Heart left ventricle (tissue), 16 donors: ENCODE measurements at regions of chr15 and their contacts with region 1.

Region 1: DNA sequence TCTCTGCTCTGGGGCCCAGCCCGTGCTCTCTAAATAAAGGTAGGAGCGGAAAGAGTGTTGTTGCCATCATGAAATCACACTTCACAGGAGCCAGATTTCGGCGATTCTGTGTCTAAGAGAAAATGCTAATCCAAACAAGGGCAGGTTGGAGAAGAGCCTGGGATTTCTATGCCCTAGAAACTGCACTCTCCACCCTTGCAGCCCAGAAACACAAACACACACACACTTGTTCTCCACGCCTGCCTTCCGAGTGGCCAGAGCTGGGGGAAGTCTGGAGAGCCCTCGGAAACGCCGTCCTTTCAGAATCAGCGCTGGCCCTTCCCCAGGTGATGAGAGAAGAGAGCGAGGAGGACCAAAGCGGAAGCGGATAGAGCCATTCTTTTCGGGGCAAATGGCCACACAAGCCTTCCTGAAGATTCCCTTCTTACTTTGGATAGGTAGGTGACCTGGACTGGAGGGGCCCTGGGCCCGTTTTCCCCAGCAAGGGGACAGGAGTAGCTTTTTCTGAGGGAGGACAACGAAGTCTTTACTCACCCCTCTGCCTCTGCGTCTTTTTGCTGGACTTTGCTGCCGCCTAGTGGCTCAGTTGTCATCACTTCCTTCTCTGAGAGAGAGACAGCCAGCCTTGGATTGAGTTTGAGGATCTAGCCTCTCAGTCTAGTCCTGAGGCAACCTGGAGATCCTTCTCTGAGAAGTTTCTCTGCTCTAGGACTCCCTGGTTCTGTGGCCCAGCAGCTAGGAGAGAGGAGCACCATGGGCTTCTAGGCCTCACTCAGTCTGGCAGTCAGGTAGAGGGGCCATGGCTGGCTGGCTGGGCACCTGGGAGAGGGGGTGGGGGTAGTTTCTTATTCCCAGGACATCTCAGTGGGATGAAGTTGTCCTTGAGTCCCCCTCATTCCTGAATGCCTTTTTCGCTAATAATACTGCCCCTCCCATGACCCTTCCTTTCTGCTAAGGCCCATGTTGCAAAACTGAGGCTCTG is 37.7 kb downstream of the SENP8 start:
- DNase-seq: peak; percentile 81 to 87 (median 85)
- ATAC-seq: peak; percentile 88 to 96 (median 92)
- H3K4me3 ChIP-seq: peak overlapping the region; percentile 4 to 73 (median 59)
- H3K27ac ChIP-seq: peak overlapping the region in 8 of 12 donors; percentile 35 to 72 (median 44)
- H3K4me1 ChIP-seq: peaks cover 0 to 16% (median 2%) of the 10 kb centered on the region in 12 donors
- H3K27me3 ChIP-seq: no peaks in the 10 kb centered on the region
- CTCF ChIP-seq: peak; percentile 68 to 90 (median 82)
- POLR2A ChIP-seq: no peak

Region 2: DNA sequence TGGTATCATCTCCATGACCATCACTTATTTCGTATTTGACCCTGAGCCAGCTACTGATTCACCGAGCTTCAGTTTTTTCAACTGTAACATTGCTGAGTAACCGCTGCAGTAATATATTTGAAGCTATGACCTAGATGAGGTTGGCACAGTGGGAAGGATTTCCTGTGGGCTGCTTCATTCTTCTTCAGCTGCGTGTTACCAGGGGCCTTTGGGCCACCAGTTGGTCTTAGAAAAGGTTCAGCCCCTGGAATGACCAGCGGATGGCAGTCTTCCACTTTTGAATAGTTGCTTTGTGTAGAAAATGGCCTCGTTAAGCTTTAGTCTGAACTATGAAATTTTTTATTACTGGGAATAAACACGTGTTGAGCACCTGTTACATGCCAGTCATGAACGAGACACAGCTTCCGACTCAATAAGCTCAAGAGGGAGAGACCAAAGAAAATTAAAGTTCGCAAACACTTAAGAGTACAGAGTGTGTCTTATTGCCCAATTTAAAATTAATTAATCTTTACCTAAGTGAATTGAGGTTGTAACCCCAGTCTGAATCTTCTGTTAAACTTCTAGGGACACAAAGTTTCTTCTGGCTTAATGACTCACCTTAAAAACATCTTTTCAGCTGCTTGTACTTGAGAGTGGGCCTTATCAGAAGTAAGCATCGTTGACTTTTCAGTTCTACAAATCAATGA is 403.2 kb before region 1 on chr15:
- intact Hi-C with region 1: loop called in 7 of 10 experiments (anchors 5 to 10 kb)
- DNase-seq: no peak
- ATAC-seq: peak in 2 of 4 donors; percentile 35 to 59
- H3K4me3 ChIP-seq: no peak overlapping the region
- H3K27ac ChIP-seq: no peak overlapping the region
- H3K4me1 ChIP-seq: peaks cover 0 to 20% (median 3%) of the 10 kb centered on the region in 12 donors
- H3K27me3 ChIP-seq: no peaks in the 10 kb centered on the region
- CTCF ChIP-seq: peak in 10 of 12 donors; percentile 16 to 56 (median 31)
- POLR2A ChIP-seq: no peak

Region 3: DNA sequence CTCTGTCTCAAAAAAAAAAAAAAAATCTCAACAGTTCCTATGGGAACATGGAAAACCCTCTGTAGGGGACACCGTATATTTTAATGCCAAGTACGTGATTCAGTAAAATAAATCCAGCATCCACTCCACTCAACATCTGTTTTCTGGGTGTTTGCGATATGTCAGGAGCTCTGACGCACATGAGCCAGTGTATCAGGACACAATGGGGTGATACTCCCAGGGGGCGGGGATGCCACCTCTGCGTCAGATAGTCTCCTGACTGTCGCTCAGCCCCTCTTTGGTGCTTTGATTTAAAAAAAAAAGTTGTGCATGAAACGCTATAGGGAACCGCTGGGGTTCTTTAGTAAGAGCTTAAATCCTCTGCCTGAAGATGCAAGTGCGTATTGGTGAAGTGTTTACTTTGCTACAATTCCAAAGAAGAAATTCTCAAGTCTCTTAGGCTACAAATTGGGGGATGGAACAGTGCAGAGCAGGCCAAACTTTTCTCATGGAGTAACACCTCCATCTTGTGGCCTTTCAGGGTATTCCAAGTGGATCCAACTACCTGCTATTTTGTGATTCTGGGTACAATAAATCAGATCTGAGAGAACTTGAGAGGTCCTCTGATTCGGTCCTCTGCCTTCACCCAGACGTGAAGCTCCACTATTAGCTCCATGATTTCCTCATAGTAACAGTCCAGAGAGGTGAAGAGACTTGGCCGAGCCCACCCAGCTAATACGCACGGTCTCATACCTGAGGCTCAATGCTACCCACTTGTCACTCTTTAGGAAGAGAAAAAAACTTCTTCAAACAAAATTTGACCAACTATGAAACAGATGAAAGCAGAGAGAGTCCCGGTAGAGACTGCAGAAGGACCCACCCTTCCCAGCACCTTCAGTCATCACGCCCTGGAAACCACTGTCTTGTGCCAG is 354.8 kb before region 1 on chr15:
- intact Hi-C with region 1: loop called in 2 of 10 experiments (anchors 10 kb)
- DNase-seq: no peak
- ATAC-seq: peak; percentile 57 to 84 (median 82)
- H3K4me3 ChIP-seq: no peak overlapping the region
- H3K27ac ChIP-seq: no peak overlapping the region
- H3K4me1 ChIP-seq: peaks cover 0 to 8% (median 2%) of the 10 kb centered on the region in 12 donors
- H3K27me3 ChIP-seq: no peaks in the 10 kb centered on the region
- CTCF ChIP-seq: peak; percentile 72 to 91 (median 84)
- POLR2A ChIP-seq: no peak

Region 4: DNA sequence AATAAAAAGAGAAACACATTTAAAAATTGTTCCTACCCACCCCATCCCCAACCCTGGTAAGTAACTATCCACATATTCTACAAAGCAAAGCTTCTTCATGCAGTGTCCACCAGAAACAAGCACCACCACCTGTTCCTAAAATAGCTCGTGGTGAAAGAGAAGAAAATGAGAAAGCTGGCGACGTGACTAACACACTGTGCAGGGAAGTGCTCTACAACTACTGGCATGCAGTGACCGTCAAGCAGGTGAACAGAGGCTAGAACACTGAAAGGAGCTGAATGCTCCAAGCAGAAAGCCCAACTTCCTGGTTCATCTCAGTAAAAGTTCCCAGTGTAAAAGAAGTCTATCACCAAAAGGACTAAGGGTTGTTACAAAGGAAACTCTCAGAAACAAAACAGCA is 264.9 kb before region 1 on chr15:
- intact Hi-C with region 1: loop called in 2 of 10 experiments (anchors 10 kb)
- DNase-seq: peak in 2 of 5 donors; percentile 43 to 47
- ATAC-seq: peak; percentile 83 to 91 (median 88)
- H3K4me3 ChIP-seq: no peak overlapping the region
- H3K27ac ChIP-seq: peak overlapping the region in 1 of 12 donors; percentile 23
- H3K4me1 ChIP-seq: peaks cover 0 to 9% (median 0%) of the 10 kb centered on the region in 12 donors
- H3K27me3 ChIP-seq: no peaks in the 10 kb centered on the region
- CTCF ChIP-seq: no peak
- POLR2A ChIP-seq: no peak

Region 5: DNA sequence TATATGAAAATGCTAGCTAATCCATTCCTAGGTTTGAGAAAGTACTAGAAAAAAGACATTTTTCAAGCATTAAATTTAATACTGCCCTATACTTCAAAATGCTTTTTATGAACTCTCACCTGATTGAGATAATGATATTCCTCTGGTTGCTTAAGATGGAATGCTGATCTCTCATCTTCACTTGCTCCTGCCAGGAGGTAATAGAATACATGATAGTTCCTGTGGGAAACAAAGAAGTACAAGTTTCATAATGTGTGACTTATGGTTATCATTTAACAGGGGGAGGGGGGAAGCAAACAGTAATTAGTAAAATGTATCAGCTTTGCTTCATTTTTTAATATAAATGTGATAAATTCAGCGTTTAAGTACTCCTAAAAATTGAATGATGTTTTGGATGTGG is 135.1 kb before region 1 on chr15:
- intact Hi-C with region 1: loop called in 1 of 10 experiments (anchors 10 kb)
- DNase-seq: no peak
- ATAC-seq: no peak
- H3K4me3 ChIP-seq: no peak overlapping the region
- H3K27ac ChIP-seq: no peak overlapping the region
- H3K4me1 ChIP-seq: no peaks in the 10 kb centered on the region
- H3K27me3 ChIP-seq: no peaks in the 10 kb centered on the region
- CTCF ChIP-seq: no peak
- POLR2A ChIP-seq: no peak